WTC11 (cell line): ENCODE measurements at regions of chr17 and their contacts with region 1.

Region 1: GRCh38 chr17:41548844-41549595 is 20.9 kb upstream of the KRT19 start:
- DNase-seq: peak; percentile 91
- ATAC-seq: peak; percentile 89
- H3K4me3 Mint-ChIP-seq: peak overlapping the region; percentile 47; the same call in 1 of the 2 replicates
- H3K27ac Mint-ChIP-seq: 0 out of 2 replicates have a peak overlapping the region, but pooled peaks have one; percentile 65
- H3K4me1 Mint-ChIP-seq: peaks cover 26% of the 10 kb centered on the region
- H3K27me3 Mint-ChIP-seq: peaks cover 5% of the 10 kb centered on the region
- CTCF ChIP-seq: peak; percentile 80

Region 2: DNA sequence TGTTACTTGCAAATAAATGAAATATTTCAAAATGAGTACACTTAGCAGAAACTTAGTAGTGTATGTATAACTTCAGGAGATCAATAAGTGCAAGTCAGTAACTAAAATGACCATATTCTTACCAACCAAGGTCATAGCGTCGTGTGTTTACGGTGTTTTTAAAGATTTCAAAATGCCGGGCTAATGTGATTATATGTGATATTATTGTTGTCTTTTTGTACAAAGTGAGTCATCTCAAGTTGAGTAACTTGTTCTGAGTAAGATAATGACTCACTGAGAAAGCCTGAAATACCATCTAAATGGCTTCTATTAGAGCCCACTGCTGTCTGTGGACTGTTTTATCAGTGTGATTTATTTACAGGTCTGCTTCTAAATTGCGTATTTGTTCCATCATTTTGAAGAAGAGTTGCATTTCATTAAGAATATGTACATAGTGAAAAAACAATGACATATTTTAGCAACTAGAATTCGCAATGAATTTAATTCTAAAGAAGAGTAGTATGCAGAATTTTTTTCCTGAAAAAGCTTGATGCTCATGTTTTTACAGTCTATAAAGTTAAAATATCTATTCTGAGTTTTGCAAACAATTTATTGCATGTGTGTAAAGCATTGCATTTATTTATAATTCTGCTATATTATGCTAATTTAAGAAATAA is 694.7 kb before region 1 on chr17:
- CTCF ChIA-PET with region 1: interaction called, 28 read pairs
- POLR2A ChIA-PET with region 1: no interaction called
- DNase-seq: no peak
- ATAC-seq: no peak
- H3K4me3 Mint-ChIP-seq: no peak overlapping the region
- H3K27ac Mint-ChIP-seq: no peak overlapping the region
- H3K4me1 Mint-ChIP-seq: peaks cover 32% of the 10 kb centered on the region
- H3K27me3 Mint-ChIP-seq: peaks cover 10% of the 10 kb centered on the region
- CTCF ChIP-seq: no peak

Region 3: GRCh38 chr17:41417576-41418015 is 131.4 kb before region 1 on chr17:
- CTCF ChIA-PET with region 1: interaction called, 63 read pairs
- POLR2A ChIA-PET with region 1: no interaction called
- DNase-seq: peak; percentile 59
- ATAC-seq: peak; percentile 96
- H3K4me3 Mint-ChIP-seq: no peak overlapping the region
- H3K27ac Mint-ChIP-seq: no peak overlapping the region
- H3K4me1 Mint-ChIP-seq: peaks cover 17% of the 10 kb centered on the region
- H3K27me3 Mint-ChIP-seq: no peaks in the 10 kb centered on the region
- CTCF ChIP-seq: peak; percentile 65

Region 4: DNA sequence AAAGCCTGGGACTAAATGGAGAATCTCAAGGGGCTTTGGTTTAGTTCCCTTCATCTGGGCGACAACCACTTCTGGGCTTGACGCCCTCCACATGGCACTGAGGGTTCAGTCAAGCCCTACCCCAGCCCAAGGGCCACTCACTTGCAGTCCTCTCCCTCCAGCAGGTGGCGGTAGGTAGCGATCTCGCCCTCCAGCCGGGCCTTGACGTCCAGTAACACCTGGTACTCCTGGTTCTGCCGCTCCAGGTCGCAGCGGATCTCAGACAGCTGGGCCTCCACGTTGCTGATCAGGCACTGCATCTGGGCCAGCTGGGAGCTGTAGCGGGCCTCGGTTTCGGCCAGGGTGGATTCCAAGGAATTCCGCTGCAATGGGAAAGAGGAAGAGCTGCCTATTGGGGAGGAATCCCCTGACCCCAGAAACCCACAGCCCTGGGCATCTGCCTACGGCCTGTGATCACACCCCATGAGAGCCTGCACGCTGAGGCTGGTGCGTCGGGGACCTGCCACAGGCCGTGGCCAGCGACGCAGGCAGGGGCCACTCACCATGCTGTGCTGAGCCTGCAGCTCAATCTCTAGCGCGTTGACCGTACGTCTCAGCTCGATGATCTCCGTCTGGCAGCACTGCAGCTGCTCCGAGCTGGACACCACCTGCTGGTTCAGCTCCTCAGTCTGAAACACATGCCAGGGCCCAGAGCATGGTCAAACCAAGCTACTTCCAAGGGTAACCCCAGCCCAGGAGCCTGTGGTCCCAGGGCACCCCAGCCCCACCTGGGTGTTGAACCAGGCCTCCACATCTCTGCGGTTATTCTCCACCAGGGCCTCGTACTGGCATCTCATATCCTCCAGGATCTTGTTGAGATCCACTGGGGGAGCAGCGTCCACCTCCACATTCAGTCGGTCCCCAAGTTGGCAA is 62.0 kb before region 1 on chr17:
- CTCF ChIA-PET with region 1: interaction called, 160 read pairs
- POLR2A ChIA-PET with region 1: interaction called, 4 read pairs
- DNase-seq: peak; percentile 92
- ATAC-seq: peak; percentile 96
- H3K4me3 Mint-ChIP-seq: no peak overlapping the region
- H3K27ac Mint-ChIP-seq: no peak overlapping the region
- H3K4me1 Mint-ChIP-seq: no peaks in the 10 kb centered on the region
- H3K27me3 Mint-ChIP-seq: peaks cover 17% of the 10 kb centered on the region
- CTCF ChIP-seq: peak; percentile 50

Region 5: DNA sequence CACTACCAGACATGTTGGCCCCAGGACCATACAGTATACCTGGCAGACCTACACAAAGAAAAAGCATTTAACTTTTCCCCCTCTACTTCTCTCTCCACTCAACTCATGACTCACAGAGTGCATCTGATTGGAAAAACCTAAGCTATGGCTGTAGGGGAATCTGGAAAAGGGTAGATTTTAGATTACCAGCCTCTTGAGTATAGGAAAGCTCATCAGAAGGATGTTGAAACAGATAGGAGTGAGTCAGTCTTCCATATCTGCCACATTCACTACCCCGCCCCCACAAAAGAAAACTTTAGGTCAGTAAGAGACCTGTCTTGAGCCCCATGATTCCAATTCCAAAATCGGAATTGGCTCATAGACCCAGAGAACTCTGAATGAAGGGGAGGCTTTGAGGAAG is 10.5 kb after region 1 on chr17:
- CTCF ChIA-PET with region 1: interaction called, 77 read pairs
- POLR2A ChIA-PET with region 1: no interaction called
- DNase-seq: no peak
- ATAC-seq: no peak
- H3K4me3 Mint-ChIP-seq: no peak overlapping the region
- H3K27ac Mint-ChIP-seq: no peak overlapping the region
- H3K4me1 Mint-ChIP-seq: peaks cover under 1% of the 10 kb centered on the region; the same call in 1 of the 2 replicates
- H3K27me3 Mint-ChIP-seq: no peaks in the 10 kb centered on the region; the same call in 1 of the 2 replicates
- CTCF ChIP-seq: no peak

Region 6: GRCh38 chr17:41615454-41615853 is 66.4 kb after region 1 on chr17:
- CTCF ChIA-PET with region 1: interaction called, 19 read pairs
- POLR2A ChIA-PET with region 1: no interaction called
- DNase-seq: no peak
- ATAC-seq: peak; percentile 65
- H3K4me3 Mint-ChIP-seq: no peak overlapping the region
- H3K27ac Mint-ChIP-seq: no peak overlapping the region
- H3K4me1 Mint-ChIP-seq: peaks cover 10% of the 10 kb centered on the region; the same call in 1 of the 2 replicates
- H3K27me3 Mint-ChIP-seq: no peaks in the 10 kb centered on the region
- CTCF ChIP-seq: no peak

Region 7: DNA sequence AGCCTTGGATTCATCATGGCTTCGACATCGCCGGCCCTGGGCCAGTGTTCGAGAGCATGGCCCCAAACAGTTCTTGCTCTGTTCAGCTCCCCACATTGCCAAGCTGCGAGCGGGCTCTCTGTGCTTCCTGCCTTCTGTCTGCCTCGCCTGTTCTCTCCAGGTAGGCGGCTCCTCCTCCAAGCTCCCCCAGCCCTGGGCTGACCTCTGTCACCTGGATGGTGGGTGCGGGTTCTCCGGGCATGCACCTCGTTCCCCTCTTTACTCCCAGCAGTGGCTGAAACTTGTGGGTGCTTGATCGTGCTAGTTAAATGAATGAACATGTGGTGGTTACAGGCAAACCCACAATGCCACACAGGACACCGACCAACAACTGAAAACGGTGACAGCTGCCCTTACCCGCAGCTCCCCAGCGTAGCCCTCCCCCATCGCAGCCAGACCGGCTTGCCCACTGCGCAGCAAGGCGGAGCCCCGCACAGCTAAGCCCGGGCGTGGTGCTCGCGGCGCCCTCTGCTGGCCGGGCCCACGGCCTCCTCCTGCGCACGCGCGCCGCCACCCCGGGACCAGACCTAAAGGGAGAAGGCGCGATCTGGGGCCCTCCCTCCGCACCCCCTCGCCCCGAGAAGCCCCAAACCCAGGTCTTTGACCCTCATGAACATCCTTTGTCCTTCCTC is 116.7 kb after region 1 on chr17:
- CTCF ChIA-PET with region 1: interaction called, 380 read pairs
- POLR2A ChIA-PET with region 1: interaction called, 4 read pairs
- DNase-seq: peak; percentile 90
- ATAC-seq: peak; percentile 82
- H3K4me3 Mint-ChIP-seq: peak overlapping the region; percentile 85
- H3K27ac Mint-ChIP-seq: peak overlapping the region; percentile 94
- H3K4me1 Mint-ChIP-seq: peaks cover 16% of the 10 kb centered on the region
- H3K27me3 Mint-ChIP-seq: peaks cover 17% of the 10 kb centered on the region
- CTCF ChIP-seq: peak; percentile 71